ENCODE measurements at regions of chr7 and their contacts with region 1.

Region 1: GRCh38 chr7:37234928-37235327 is 213.7 kb downstream of the ELMO1 start:
- DNase-seq: no peak
- ATAC-seq: no peak
- H3K4me3 Mint-ChIP-seq: no peak overlapping the region
- H3K27ac Mint-ChIP-seq: no peak overlapping the region
- H3K4me1 Mint-ChIP-seq: peaks cover 2% of the 10 kb centered on the region
- H3K27me3 Mint-ChIP-seq: no peaks in the 10 kb centered on the region
- CTCF ChIP-seq: no peak

Region 2: DNA sequence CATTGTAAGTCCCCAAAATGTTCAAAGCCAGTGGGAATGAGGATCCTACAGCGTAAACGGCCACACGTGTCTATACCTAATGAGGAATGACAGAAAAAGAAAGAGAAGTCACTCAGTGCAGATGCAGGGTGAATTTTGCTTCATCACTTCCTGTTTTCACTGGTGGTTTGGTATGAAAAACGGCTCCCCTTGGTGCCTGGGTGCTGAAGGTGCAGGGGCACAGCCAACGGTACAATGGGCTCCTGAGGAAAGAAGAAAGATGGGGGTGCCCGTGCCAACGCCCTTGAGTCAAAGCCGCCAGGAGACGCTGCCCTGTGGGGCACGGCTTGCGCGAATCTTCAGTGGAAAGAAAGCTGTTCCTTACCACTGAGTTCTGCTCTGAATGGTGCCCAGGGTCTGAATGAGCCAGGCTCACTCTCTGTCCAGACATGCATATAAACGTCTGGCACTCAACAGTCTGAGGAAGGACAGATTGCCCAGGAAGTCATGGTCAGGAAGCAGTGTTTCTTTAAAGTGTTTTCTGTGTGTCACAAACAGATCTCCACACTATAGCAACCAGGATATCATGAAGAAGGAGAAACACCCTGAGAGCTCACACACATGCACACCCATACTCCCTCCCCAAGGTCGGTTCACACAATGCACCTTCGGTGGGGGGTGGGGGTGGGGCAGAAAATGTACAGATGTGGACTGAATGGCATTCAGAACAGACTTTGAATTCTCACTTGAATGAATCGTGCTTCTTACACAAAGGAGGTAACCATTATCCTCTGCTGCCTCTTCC is 108.0 kb after region 1 on chr7:
- CTCF ChIA-PET with region 1: interaction called, 4 read pairs
- POLR2A ChIA-PET with region 1: no interaction called
- intact Hi-C with region 1: loop called (anchors 1 kb)
- DNase-seq: peak; percentile 59
- ATAC-seq: peak; percentile 86
- H3K4me3 Mint-ChIP-seq: peak overlapping the region; percentile 98
- H3K27ac Mint-ChIP-seq: peak overlapping the region; percentile 98
- H3K4me1 Mint-ChIP-seq: peaks cover 85% of the 10 kb centered on the region
- H3K27me3 Mint-ChIP-seq: no peaks in the 10 kb centered on the region
- CTCF ChIP-seq: no peak

Region 3: GRCh38 chr7:37495574-37496184 is 260.8 kb after region 1 on chr7:
- CTCF ChIA-PET with region 1: interaction called, 35 read pairs
- POLR2A ChIA-PET with region 1: no interaction called
- intact Hi-C with region 1: loop called (anchors 1 kb)
- DNase-seq: no peak
- ATAC-seq: peak; percentile 58
- H3K4me3 Mint-ChIP-seq: no peak overlapping the region
- H3K27ac Mint-ChIP-seq: no peak overlapping the region
- H3K4me1 Mint-ChIP-seq: no peaks in the 10 kb centered on the region
- H3K27me3 Mint-ChIP-seq: no peaks in the 10 kb centered on the region
- CTCF ChIP-seq: peak; percentile 91

Region 4: DNA sequence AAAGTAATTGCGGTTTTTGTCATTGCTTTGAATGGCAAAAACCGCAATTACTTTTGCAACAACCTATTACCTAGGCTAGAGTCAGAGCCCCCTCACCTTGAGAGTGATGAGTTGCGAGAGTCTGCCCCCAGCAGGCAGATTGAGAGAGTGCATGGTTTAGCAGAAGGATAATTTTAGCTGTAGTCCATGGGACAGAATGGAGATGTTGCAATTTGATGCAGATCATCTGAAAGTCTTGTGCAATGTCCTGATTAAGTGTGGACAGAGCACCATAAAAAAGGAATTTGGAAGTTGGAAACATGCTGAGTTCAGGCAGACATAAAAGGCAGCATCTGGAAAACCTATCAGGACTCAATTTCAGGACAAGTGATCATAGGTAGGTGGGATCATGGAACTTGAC is 497.3 kb after region 1 on chr7:
- CTCF ChIA-PET with region 1: interaction called, 3 read pairs
- POLR2A ChIA-PET with region 1: no interaction called
- intact Hi-C with region 1: loop called (anchors 2 kb)
- DNase-seq: no peak
- ATAC-seq: peak; percentile 87
- H3K4me3 Mint-ChIP-seq: no peak overlapping the region
- H3K27ac Mint-ChIP-seq: no peak overlapping the region
- H3K4me1 Mint-ChIP-seq: peaks cover 2% of the 10 kb centered on the region
- H3K27me3 Mint-ChIP-seq: peaks cover 10% of the 10 kb centered on the region
- CTCF ChIP-seq: no peak